A549 (cell line): ENCODE measurements at regions of chr7 and their contacts with region 1.

Region 1: GRCh38 chr7:80918909-80919662 is at the start of gene SEMA3C:
- DNase-seq: peak; percentile 70 to 94
- ATAC-seq: peak; percentile 94 to 95
- H3K4me3 ChIP-seq: peak within 1 kb of the TSS; percentile 84
- H3K27ac ChIP-seq: peak within 1 kb of the TSS; percentile 94 to 95
- H3K4me1 ChIP-seq: peaks cover 53% of the 10 kb centered on the region
- CTCF ChIP-seq: no peak
- EP300 ChIP-seq: no peak
- POLR2A ChIP-seq: peak; percentile 91
- RAD21 ChIP-seq: peak; percentile 11 to 61; a peak in 4 of 5 replicates
- polyA plus RNA-seq, gene SEMA3C: 208 and 212 TPM in 2 replicates

Region 2: DNA sequence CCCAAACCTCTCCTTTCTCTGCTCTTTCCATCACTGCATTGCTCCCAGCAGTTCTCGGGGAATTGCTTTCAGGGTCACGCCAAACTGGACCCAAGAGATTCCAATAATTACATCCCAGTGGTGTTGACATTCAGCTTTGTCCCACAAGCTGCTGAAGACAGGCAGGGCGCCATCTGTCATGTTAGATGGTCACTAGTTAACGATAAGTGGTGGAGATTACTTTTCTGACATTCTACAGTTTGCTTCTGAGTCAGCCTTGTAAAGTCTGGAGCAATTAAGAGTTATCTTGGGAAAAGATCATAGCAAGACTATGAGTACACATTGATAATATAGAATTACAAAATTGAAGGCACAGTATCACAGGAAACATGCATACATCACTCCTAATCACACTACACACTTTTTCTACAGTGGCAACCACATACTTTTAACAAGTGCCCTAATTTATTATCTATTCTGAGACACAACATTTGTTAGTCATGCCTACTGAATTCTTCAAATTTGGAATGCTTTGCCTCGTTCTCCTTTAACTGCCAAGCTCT is 42.1 kb before region 1 on chr7:
- CTCF ChIA-PET with region 1: interaction called, 4 read pairs
- POLR2A ChIA-PET with region 1: interaction called, 10 read pairs
- DNase-seq: peak in 1 of 2 experiments; percentile 62
- ATAC-seq: peak; percentile 19 to 73; a peak in 4 of 6 replicates
- H3K4me3 ChIP-seq: no peak overlapping the region
- H3K27ac ChIP-seq: peak overlapping the region; percentile 87 to 91
- H3K4me1 ChIP-seq: peaks cover 77% of the 10 kb centered on the region
- CTCF ChIP-seq: 0 out of 3 replicates have a peak, but pooled peaks have one; percentile 13
- EP300 ChIP-seq: peak; percentile 51 to 77; a peak in 2 of 5 replicates
- POLR2A ChIP-seq: no peak
- RAD21 ChIP-seq: peak; percentile 31 to 33; a peak in 4 of 5 replicates

Region 3: DNA sequence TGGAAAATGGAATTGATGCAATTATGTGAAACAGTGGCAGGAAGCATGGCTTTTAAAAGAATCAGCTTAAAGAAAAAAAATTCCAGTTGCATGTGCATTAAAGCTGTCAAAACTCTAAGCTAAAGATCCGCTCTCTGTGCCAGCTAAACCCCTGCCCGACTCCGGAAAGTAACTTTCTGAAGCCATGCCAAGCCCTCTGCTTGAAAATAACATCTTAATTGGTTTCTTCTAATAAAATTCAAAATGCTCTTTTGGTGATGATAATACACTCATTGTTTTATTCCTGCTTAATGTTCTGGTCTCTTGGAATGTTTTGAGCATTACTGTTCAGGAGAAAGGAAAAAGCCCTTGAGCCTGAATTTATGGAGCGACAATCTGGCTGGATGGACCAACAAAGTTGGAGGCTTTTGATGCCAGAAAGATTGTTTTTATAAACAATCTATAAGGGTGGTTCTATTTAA is 11.9 kb before region 1 on chr7:
- CTCF ChIA-PET with region 1: interaction called, 12 read pairs
- POLR2A ChIA-PET with region 1: interaction called, 10 read pairs
- DNase-seq: no peak
- ATAC-seq: no peak
- H3K4me3 ChIP-seq: no peak overlapping the region
- H3K27ac ChIP-seq: peak overlapping the region; percentile 36 to 38; a peak in 5 of 6 replicates
- H3K4me1 ChIP-seq: peaks cover 81% of the 10 kb centered on the region
- CTCF ChIP-seq: no peak
- EP300 ChIP-seq: no peak
- POLR2A ChIP-seq: no peak
- RAD21 ChIP-seq: no peak

Region 4: DNA sequence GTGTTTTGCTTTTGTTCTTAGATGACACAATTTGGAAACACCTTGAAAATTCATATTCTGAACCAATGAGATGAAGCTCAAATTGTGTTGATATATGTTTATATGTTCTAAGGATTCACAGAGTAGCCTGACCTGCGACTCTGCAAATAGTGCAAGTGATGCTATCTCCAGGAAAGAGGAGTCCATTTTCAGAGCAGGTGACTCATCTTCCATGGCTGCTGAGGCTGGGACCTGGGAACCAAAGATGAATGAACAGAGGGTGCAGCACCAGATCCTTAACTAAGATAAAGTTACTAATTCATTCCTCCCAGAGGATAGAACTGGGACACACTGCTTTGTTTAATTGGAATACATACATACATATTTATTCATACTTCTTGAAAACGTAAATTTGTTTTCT is 240.3 kb after region 1 on chr7:
- CTCF ChIA-PET with region 1: interaction called, 3 read pairs
- POLR2A ChIA-PET with region 1: interaction called, 16 read pairs
- DNase-seq: peak; percentile 38 to 66
- ATAC-seq: peak; percentile 41 to 55; a peak in 3 of 6 replicates
- H3K4me3 ChIP-seq: no peak overlapping the region
- H3K27ac ChIP-seq: peak overlapping the region; percentile 86 to 92
- H3K4me1 ChIP-seq: peaks cover 87% of the 10 kb centered on the region
- CTCF ChIP-seq: no peak
- EP300 ChIP-seq: no peak
- POLR2A ChIP-seq: no peak
- RAD21 ChIP-seq: no peak

Region 5: GRCh38 chr7:81267508-81267907 is 348.4 kb after region 1 on chr7:
- CTCF ChIA-PET with region 1: no interaction called
- POLR2A ChIA-PET with region 1: no interaction called
- DNase-seq: peak in 1 of 2 experiments; percentile 25
- ATAC-seq: no peak
- H3K4me3 ChIP-seq: no peak overlapping the region
- H3K27ac ChIP-seq: no peak overlapping the region
- H3K4me1 ChIP-seq: no peaks in the 10 kb centered on the region
- CTCF ChIP-seq: no peak
- EP300 ChIP-seq: no peak
- POLR2A ChIP-seq: no peak
- RAD21 ChIP-seq: no peak

Region 6: GRCh38 chr7:81469869-81470723 is 551.0 kb after region 1 on chr7:
- CTCF ChIA-PET with region 1: interaction called, 54 read pairs
- POLR2A ChIA-PET with region 1: interaction called, 10 read pairs
- DNase-seq: peak; percentile 52 to 90
- ATAC-seq: peak; percentile 90 to 97
- H3K4me3 ChIP-seq: no peak overlapping the region
- H3K27ac ChIP-seq: peak overlapping the region; percentile 49 to 82
- H3K4me1 ChIP-seq: peaks cover 20% of the 10 kb centered on the region
- CTCF ChIP-seq: peak; percentile 92
- EP300 ChIP-seq: no peak
- POLR2A ChIP-seq: no peak
- RAD21 ChIP-seq: peak; percentile 96 to 97